Activated CD4-positive, alpha-beta T cell treated with anti-CD3 and anti-CD28 coated beads for 36 hours (primary cell): ENCODE measurements at regions of chr1 and their contacts with region 1.

Region 1: GRCh38 chr1:215146341-215146826 is 63.8 kb downstream of the KCNK2 start:
- DNase-seq: peak; percentile 28
- ATAC-seq: no peak
- H3K4me3 Mint-ChIP-seq: no peak overlapping the region
- H3K27ac Mint-ChIP-seq: no peak overlapping the region
- H3K4me1 Mint-ChIP-seq: no peaks in the 10 kb centered on the region
- H3K27me3 Mint-ChIP-seq: no peaks in the 10 kb centered on the region

Region 2: GRCh38 chr1:214632091-214632490 is 514.3 kb before region 1 on chr1:
- CTCF ChIA-PET with region 1: interaction called, 3 read pairs
- POLR2A ChIA-PET with region 1: no interaction called
- intact Hi-C with region 1: loop called in 1 of 2 experiments (anchors 1 kb)
- DNase-seq: peak; percentile 21
- ATAC-seq: peak; percentile 52
- H3K4me3 Mint-ChIP-seq: no peak overlapping the region
- H3K27ac Mint-ChIP-seq: no peak overlapping the region
- H3K4me1 Mint-ChIP-seq: peaks cover 22% of the 10 kb centered on the region
- H3K27me3 Mint-ChIP-seq: no peaks in the 10 kb centered on the region

Region 3: GRCh38 chr1:214823311-214824117 is 322.9 kb before region 1 on chr1:
- CTCF ChIA-PET with region 1: no interaction called
- POLR2A ChIA-PET with region 1: no interaction called
- intact Hi-C with region 1: loop called in 1 of 2 experiments (anchors 5 kb)
- DNase-seq: peak; percentile 40
- ATAC-seq: no peak
- H3K4me3 Mint-ChIP-seq: no peak overlapping the region
- H3K27ac Mint-ChIP-seq: no peak overlapping the region
- H3K4me1 Mint-ChIP-seq: no peaks in the 10 kb centered on the region
- H3K27me3 Mint-ChIP-seq: peaks cover 2% of the 10 kb centered on the region